ENCODE measurements at regions of chr2 and their contacts with region 1.

Region 1: GRCh38 chr2:132669854-132670495 is at the start of gene LYPD1:
- DNase-seq: no peak
- ATAC-seq: peak; percentile 42 to 57
- total RNA-seq, gene LYPD1: 0.34 to 0.35 TPM

Region 2: GRCh38 chr2:132267105-132267497 is 402.9 kb before region 1 on chr2:
- intact Hi-C with region 1: no loop called
- DNase-seq: no peak
- ATAC-seq: peak in 1 of 2 donors; percentile 33

Region 3: GRCh38 chr2:132638306-132639122 is 31.5 kb before region 1 on chr2:
- intact Hi-C with region 1: no loop called
- DNase-seq: no peak
- ATAC-seq: no peak

Region 4: DNA sequence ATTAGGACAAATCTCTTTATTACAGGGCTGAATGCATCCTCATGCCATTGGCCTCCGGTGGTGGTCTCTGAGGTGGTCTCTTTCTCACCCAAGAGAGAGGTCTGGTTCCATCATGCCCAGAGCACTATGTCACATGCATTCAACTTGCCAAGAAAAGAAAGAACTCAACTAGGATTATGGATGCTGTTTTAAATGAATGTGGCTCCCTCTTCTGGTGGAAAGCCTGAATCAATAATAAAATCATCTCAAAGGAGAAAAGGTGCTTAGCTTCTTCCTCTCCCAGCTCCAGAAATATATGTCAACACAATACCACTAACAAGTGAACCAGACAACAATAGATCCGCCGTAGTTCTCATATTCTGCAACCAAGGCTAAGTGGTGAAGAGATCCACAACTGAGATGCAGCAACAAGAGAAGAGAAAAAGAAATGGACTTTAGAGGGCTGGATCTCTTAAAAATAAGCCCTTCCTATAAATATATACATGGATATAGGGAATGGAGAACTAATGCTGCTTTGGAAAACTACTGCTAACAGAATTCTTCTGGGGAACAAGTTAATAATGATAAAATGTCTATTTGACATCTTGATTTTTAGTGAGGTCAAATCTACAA is 501.5 kb after region 1 on chr2:
- intact Hi-C with region 1: loop called in 1 of 2 experiments (anchors 10 kb)
- DNase-seq: no peak
- ATAC-seq: peak in 1 of 2 donors; percentile 24

Measured in left cardiac atrium (tissue), 4 donors.